HepG2 (cell line): ENCODE measurements at regions of chr1 and their contacts with region 1.

Region 1: GRCh38 chr1:218345673-218346390 is 696 bp downstream of the TGFB2 start:
- DNase-seq: peak; percentile 7
- ATAC-seq: peak; percentile 95
- H3K4me3 ChIP-seq: peak overlapping the region; percentile 56 to 78 (median 56)
- H3K27ac ChIP-seq: no peak overlapping the region
- H3K4me1 ChIP-seq: peaks cover 29% of the 10 kb centered on the region
- H3K27me3 ChIP-seq: peaks cover 2 to 41% of the 10 kb centered on the region in 2 experiments; a peak in 3 of 5 replicates
- CTCF ChIP-seq: 0 out of 2 replicates have a peak, but pooled peaks have one; percentile 11
- EP300 ChIP-seq: no peak
- POLR2A ChIP-seq: no peak
- RAD21 ChIP-seq: no peak

Region 2: DNA sequence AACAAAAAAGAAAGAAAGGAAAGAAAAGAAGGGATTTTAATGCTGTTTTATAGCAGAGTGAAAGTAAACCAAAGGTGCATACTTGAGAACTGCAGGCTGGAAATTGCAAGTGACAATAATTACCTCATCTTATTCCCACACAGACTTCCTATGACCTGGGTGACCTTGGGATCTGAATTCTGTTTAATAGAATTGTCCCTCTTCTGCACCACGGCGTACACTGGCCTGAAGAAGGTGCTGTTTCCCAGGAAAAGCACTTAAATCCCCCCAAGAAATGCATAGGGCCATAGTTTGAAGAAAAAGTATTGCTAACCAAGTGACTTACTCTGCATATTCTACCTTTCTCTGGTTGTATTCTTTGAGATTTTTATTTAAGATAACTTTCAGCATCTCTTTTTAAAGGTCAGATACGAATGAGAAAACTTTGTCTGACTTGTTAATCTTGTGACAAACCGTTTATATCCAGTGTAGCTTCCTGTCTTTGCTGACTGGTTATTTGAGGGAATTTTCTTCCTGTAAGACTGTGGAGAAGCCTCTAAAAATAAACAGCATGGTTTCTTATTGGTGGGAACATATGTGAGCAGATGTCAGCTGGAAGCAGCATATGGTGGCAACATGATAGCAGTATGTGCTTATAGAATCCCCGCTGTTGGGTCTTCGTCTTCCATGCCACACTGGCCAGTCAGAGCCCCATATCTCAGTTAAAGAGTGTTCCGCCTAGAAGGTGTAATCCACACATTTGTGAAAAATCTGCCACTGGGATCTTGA is 15.7 kb after region 1 on chr1:
- CTCF ChIA-PET with region 1: no interaction called
- POLR2A ChIA-PET with region 1: no interaction called
- in situ Hi-C with region 1: no loop called
- intact Hi-C with region 1: no loop called
- DNase-seq: peak; percentile 66
- ATAC-seq: peak; percentile 92
- H3K4me3 ChIP-seq: no peak overlapping the region
- H3K27ac ChIP-seq: no peak overlapping the region
- H3K4me1 ChIP-seq: peaks cover 27% of the 10 kb centered on the region
- H3K27me3 ChIP-seq: no peaks in the 10 kb centered on the region
- CTCF ChIP-seq: peak; percentile 82
- EP300 ChIP-seq: no peak
- POLR2A ChIP-seq: no peak
- RAD21 ChIP-seq: peak; percentile 74

Region 3: GRCh38 chr1:218983887-218984286 is 638.1 kb after region 1 on chr1:
- CTCF ChIA-PET with region 1: no interaction called
- POLR2A ChIA-PET with region 1: no interaction called
- in situ Hi-C with region 1: loop called (anchors 25 kb)
- intact Hi-C with region 1: no loop called
- DNase-seq: peak; percentile 19
- ATAC-seq: peak; percentile 100
- H3K4me3 ChIP-seq: no peak overlapping the region
- H3K27ac ChIP-seq: no peak overlapping the region
- H3K4me1 ChIP-seq: no peaks in the 10 kb centered on the region
- H3K27me3 ChIP-seq: no peaks in the 10 kb centered on the region
- CTCF ChIP-seq: peak; percentile 56
- EP300 ChIP-seq: no peak
- POLR2A ChIP-seq: no peak
- RAD21 ChIP-seq: no peak